ENCODE measurements at regions of chr15 and their contacts with region 1.

Region 1: DNA sequence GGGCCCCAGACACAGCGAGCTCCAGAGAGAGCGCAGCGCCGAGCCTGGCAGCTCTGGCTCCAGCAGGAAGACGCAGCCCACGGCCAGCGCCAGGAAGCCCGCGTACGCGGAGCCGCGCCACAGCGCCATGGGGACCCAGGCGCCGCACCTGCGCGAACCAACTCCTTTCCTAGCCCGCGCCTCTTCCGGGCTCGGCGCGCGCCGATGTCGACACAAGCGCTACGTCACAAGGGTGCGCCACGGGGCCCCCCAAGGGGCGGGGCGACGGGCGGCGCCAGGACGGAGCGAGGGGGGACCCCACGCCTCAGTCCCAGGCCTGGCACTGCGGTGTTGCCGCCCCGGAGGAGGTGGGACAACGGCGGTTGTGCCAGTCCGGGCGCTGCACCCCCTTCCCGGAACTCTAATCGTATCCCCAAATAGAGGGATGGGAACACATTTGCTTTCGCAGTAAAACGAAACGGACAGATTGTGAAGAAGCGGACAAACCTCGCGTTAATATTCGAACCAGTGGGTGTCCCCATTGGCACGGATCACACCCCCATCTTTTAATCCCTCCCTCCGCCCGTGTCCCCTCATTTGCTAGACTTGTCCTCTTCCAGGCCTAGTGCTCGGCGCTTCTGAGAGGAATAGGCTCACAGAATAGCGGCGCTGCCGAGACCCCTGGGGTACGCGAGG is at the start of gene ADPGK:
- DNase-seq: peak; percentile 94
- H3K4me3 ChIP-seq: peak within 1 kb of the TSS; percentile 97
- H3K27ac ChIP-seq: peak within 1 kb of the TSS; percentile 96
- H3K4me1 ChIP-seq: peaks cover 33% of the 10 kb centered on the region
- H3K27me3 ChIP-seq: no peaks in the 10 kb centered on the region
- total RNA-seq, gene ADPGK: 66.6 and 86.2 TPM in 2 replicates

Region 2: GRCh38 chr15:73273181-73274002 is 489.7 kb after region 1 on chr15:
- in situ Hi-C with region 1: loop called (anchors 25 kb)
- DNase-seq: peak; percentile 73
- H3K4me3 ChIP-seq: no peak overlapping the region
- H3K27ac ChIP-seq: no peak overlapping the region
- H3K4me1 ChIP-seq: no peaks in the 10 kb centered on the region
- H3K27me3 ChIP-seq: no peaks in the 10 kb centered on the region